ENCODE measurements at regions of chr22 and their contacts with region 1.

Region 1: DNA sequence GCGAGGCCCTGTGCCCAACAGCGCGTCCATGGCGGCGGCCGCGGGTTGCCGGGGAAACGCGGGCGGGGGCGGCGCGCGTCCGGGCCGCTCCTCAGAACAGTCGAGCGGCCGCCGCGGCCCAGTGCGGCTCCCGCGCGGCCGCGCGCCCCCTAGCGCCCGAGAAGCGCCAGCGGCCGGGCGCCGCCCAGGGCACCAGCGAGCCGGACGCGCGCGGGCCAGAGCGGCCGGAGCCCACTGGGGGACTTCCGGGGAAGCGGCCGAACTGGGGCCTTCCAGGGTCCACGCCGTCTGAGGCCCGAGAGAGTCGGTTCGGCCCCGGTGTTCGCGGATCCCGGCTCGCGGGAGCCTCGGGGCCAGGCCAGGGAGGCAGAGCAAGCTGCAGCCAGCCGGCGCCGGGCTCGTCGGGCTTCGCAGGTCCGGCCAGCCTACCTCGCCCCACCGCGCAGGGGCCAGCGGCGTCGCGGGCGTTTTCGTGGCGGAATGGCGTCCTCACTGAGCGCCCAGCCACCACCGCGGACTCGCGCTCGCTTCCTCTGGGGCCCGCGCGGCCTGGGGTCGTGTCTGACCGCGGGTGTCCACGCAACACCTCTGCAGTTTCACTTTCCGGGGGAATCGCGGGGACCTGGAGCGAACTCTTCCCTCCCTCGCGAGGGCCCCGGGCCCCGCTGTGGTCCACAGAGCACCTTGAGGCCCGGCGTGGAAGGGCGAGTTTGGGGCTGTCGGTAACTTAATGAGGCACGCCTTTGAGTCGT is at the start of gene DENND6B:
- DNase-seq: peak; percentile 29 to 90
- H3K4me3 ChIP-seq: peak within 1 kb of the TSS; percentile 87 to 96
- H3K27ac ChIP-seq: peak within 1 kb of the TSS; percentile 91 to 93
- H3K4me1 ChIP-seq: peaks cover 10% of the 10 kb centered on the region in 2 donors
- H3K27me3 ChIP-seq: no peaks in the 10 kb centered on the region
- CTCF ChIP-seq: peak in 2 of 3 experiments; percentile 35 to 95
- total RNA-seq, gene DENND6B: 1.4 TPM

Region 2: GRCh38 chr22:50027639-50028537 is 299.2 kb before region 1 on chr22:
- intact Hi-C with region 1: no loop called
- DNase-seq: no peak
- H3K4me3 ChIP-seq: no peak overlapping the region
- H3K27ac ChIP-seq: no peak overlapping the region
- H3K4me1 ChIP-seq: peaks cover 0 to 2% of the 10 kb centered on the region in 2 donors
- H3K27me3 ChIP-seq: no peaks in the 10 kb centered on the region
- CTCF ChIP-seq: no peak

Region 3: GRCh38 chr22:50244420-50245213 is 82.5 kb before region 1 on chr22 and contains the start of gene TUBGCP6:
- intact Hi-C with region 1: loop called (anchors 1 kb)
- DNase-seq: peak; percentile 63 to 98
- H3K4me3 ChIP-seq: peak within 1 kb of the TSS; percentile 70 to 91
- H3K27ac ChIP-seq: peak within 1 kb of the TSS; percentile 92 to 95
- H3K4me1 ChIP-seq: peaks cover 14 to 35% of the 10 kb centered on the region in 2 donors
- H3K27me3 ChIP-seq: no peaks in the 10 kb centered on the region
- CTCF ChIP-seq: peak in 1 of 3 experiments; percentile 11
- total RNA-seq, gene TUBGCP6: 58.1 TPM

Region 4: GRCh38 chr22:50252081-50253045 is 74.8 kb before region 1 on chr22:
- intact Hi-C with region 1: loop called (anchors 1 kb)
- DNase-seq: peak in 1 of 2 donors; percentile 88
- H3K4me3 ChIP-seq: peak overlapping the region in 1 of 2 donors; percentile 82
- H3K27ac ChIP-seq: peak overlapping the region; percentile 66 to 71
- H3K4me1 ChIP-seq: peaks cover 11 to 19% of the 10 kb centered on the region in 2 donors
- H3K27me3 ChIP-seq: no peaks in the 10 kb centered on the region
- CTCF ChIP-seq: peak; percentile 60 to 74 (median 70)

Region 5: DNA sequence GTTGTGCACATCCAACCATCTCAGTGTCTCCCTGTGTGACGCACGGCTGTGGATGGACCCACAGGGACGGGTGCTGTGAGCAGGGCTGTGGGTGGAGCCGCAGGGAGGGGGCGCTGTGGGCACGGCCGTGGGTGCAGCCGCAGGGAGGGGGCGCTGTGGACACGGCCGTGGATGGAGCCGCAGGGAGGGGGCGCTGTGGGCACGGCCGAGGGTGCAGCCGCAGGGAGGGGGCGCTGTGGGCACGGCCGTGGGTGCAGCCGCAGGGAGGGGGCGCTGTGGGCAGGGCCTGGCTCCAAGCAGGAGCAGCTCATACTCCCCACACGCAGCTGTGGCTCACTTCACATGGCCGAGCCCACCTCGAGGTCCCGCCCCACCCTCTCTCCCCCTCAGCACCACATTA is 51.0 kb before region 1 on chr22:
- intact Hi-C with region 1: loop called (anchors 1 kb)
- DNase-seq: peak in 1 of 2 donors; percentile 74
- H3K4me3 ChIP-seq: no peak overlapping the region
- H3K27ac ChIP-seq: no peak overlapping the region
- H3K4me1 ChIP-seq: peaks cover 5 to 9% of the 10 kb centered on the region in 2 donors
- H3K27me3 ChIP-seq: no peaks in the 10 kb centered on the region
- CTCF ChIP-seq: peak in 2 of 3 experiments; percentile 55 to 64

Region 6: GRCh38 chr22:50293441-50294318 is 33.5 kb before region 1 on chr22:
- intact Hi-C with region 1: loop called (anchors 1 kb)
- DNase-seq: no peak
- H3K4me3 ChIP-seq: peak overlapping the region; percentile 45 to 57
- H3K27ac ChIP-seq: peak overlapping the region; percentile 77 to 97
- H3K4me1 ChIP-seq: peaks cover 9 to 38% of the 10 kb centered on the region in 2 donors
- H3K27me3 ChIP-seq: no peaks in the 10 kb centered on the region
- CTCF ChIP-seq: no peak

Region 7: GRCh38 chr22:50306753-50307749 is 20.1 kb before region 1 on chr22 and contains the start of gene PLXNB2:
- intact Hi-C with region 1: loop called (anchors 1 kb)
- DNase-seq: peak in 1 of 2 donors; percentile 90
- H3K4me3 ChIP-seq: peak within 1 kb of the TSS; percentile 71 to 95
- H3K27ac ChIP-seq: peak within 1 kb of the TSS; percentile 86 to 96
- H3K4me1 ChIP-seq: peaks cover 44 to 46% of the 10 kb centered on the region in 2 donors
- H3K27me3 ChIP-seq: no peaks in the 10 kb centered on the region
- CTCF ChIP-seq: no peak
- total RNA-seq, gene PLXNB2: 287 TPM

Region 8: DNA sequence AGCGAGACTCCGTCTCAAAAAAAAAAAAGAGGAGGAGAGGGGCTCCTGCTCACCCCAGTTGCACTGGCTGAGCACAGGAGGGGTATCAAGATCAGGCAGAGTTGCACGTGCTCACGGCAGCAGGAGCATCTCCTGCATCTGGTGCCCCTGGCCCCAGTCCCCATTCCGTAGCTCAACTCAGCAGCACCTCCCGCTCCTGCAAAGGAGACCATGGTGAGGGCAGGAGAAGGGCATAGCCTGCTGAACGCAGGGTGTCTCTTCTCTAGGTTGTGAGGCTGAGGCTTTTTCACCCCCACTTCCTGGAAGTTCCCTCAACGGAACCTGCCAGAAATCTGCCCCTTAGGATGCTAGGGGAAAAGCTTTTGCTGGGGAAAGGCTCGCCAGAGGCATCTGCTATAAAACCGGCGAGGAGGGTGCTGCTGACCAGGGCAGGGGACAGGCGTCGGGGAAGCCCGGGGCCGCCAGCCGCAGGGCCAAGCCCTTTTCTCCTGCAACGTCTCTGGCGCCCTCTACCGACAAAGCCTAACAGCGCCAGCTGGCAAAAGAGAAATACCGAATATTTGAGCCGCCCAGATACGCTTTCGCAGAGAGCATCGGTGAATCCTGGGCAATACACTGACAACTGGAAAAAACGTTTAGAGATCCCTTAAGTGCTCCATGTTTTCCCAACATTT is 15.0 kb after region 1 on chr22:
- intact Hi-C with region 1: loop called (anchors 1 kb)
- DNase-seq: peak in 1 of 2 donors; percentile 94
- H3K4me3 ChIP-seq: peak overlapping the region; percentile 81 to 100
- H3K27ac ChIP-seq: no peak overlapping the region
- H3K4me1 ChIP-seq: peaks cover 3 to 4% of the 10 kb centered on the region in 2 donors
- H3K27me3 ChIP-seq: no peaks in the 10 kb centered on the region
- CTCF ChIP-seq: peak; percentile 91 to 98 (median 97)